SK-N-SH (cell line): ENCODE measurements at regions of chr2 and their contacts with region 1.

Region 1: GRCh38 chr2:85420536-85421259 is 2.2 kb downstream of the SH2D6 start:
- DNase-seq: peak; percentile 92
- H3K4me3 ChIP-seq: peak overlapping the region in 1 of 2 experiments; percentile 31; a peak in 1 of 4 replicates
- H3K27ac ChIP-seq: peak overlapping the region in 1 of 2 experiments; percentile 60; a peak in 2 of 4 replicates
- H3K4me1 ChIP-seq: peaks cover 9 to 23% of the 10 kb centered on the region in 2 experiments; a peak in 1 of 4 replicates
- H3K27me3 ChIP-seq: no peaks in the 10 kb centered on the region
- CTCF ChIP-seq: peak; percentile 99
- EP300 ChIP-seq: no peak
- RAD21 ChIP-seq: peak; percentile 99

Region 2: DNA sequence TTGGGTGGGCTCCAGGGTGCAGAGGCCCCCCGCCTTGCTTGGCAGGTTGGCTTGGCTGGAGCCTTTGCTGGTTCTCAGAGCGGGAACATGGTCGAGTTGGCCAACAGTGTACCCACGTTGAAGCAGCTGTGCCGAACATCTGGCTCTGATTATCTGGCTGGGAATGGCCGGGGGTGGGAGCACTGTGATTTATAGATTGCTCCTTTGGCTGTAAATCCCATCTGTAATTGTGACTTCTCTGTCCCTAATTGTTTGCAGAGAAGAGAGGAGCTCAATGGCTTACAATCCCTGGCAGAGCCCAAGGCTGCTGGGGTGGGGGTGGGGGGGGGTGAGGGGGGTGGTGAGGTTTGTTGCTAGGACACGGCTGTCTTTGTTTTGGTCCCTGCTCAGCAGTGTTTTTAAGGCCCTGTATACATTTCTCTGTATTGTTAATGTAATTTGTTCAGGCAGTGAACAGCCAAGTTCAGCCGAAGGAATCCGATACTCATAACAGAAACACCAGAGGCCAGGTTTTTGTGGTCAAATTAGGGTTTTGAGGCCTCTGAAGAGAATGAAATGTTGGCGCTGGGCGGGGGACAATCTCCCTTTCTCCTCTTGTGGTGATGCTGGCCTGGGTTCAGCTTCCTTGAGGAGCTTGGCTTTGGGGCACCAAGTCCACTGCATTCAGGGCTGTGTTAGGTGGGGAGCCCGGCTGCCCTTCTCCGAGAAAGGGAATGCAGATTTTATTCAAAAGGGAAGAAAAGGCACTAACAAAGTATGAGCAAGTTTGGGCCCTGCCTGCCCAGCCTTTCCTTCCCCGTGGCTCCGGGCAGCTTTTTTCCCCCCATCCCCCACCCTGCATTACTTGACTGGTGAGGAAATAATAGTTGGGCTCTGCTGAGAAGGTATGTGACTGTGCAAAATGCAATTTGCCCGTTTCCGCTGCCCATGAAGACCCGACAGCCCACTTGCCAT is 205.0 kb before region 1 on chr2:
- CTCF ChIA-PET with region 1: no interaction called
- POLR2A ChIA-PET with region 1: no interaction called
- DNase-seq: peak; percentile 87
- H3K4me3 ChIP-seq: peak overlapping the region in 1 of 2 experiments; percentile 7; a peak in 1 of 4 replicates
- H3K27ac ChIP-seq: peak overlapping the region; percentile 80 to 90
- H3K4me1 ChIP-seq: peaks cover 36 to 39% of the 10 kb centered on the region in 2 experiments
- H3K27me3 ChIP-seq: no peaks in the 10 kb centered on the region
- CTCF ChIP-seq: no peak
- EP300 ChIP-seq: peak in 1 of 2 experiments; percentile 92; a peak in 2 of 4 replicates
- RAD21 ChIP-seq: peak; percentile 3; the same call in 1 of the 2 replicates

Region 3: DNA sequence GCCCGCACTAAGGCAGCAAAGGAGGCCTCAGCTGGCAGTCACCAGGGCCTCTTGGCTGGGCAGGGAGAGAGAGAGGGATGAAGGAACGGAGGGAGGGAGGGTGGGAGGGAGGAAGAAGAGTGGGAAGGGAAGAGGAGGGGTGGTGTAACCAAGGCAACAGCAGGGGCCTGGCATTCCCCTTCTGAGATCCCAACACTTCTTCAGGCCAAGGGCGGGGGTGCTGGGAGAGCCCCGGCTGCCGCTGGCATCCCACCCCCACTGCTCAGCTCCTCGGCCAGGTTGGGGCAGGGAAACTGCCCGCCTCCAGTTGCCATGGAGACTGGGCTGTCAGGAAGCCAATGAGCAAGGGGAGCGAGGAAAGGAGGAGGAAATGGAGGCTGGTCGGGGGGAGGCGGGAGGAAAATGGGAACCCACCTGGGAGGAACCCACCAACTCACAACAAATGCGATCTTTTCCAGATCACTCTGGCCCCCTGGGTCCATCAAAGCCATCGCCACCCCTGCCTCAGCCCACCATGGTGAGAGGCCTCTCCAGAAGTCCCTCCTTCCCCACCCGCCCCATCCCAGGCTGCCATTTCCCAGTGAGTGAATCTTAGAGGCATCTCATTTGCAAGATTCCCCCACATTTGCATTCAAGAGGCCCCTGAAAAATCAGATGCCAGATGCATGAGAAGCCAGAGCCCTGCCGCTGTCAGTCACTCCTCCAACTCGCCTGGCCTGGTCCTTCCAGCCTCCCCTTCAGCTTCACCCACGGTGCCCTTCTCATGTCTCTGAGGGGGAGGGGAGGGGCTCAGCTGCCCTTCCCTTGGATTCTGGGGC is 10.3 kb after region 1 on chr2:
- CTCF ChIA-PET with region 1: interaction called, 28 read pairs
- POLR2A ChIA-PET with region 1: interaction called, 8 read pairs
- DNase-seq: peak; percentile 79
- H3K4me3 ChIP-seq: no peak overlapping the region
- H3K27ac ChIP-seq: no peak overlapping the region; a peak in 1 of 4 replicates
- H3K4me1 ChIP-seq: peaks cover 0 to 56% of the 10 kb centered on the region in 2 experiments; a peak in 2 of 4 replicates
- H3K27me3 ChIP-seq: no peaks in the 10 kb centered on the region
- CTCF ChIP-seq: no peak
- EP300 ChIP-seq: no peak
- RAD21 ChIP-seq: no peak

Region 4: DNA sequence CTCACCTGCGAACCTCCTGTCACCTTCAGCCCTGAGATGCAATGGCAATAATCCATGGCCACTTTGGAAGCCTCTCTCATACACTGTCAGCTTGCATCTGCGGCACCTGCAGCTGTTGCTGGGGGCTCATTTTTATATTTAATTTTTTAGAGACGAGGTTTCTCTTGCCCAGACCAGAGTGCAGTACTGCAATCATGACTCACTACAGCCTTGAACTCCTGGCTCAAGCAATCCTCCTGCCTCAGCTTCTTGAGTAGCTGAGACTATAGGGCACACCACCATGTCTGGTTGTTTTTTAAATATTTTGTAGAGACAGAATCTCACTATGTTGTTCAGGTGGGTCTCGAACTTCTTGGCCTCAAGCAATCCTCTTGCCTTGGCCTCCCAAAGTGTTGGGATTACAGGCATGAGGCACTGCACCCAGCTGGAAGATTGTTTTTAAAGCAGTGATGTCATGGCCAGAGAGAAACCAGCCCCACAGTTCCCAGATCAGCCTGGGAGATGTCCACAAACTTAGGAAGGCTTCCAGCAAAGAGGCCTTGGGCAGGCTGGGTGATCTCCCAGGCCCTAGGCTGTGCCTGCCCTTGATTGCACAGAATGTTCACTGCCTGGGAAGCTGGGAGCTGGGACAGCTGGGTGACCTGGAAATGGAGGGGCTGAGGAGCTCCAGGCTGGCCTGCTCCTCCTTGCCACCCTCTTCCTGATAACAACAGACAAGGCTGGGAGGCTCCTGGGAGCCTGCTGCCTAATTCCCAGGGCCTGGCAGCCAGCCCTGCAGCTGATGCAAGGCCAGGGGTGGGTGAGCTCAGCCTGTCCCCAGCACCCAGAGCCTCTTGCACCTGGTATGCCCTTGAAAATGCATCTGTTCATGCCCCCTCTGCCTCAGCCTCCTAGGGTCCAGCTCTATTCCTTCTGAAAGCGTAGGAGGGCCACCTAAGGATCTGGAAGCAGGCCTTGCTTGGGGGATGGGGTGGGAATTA is 24.9 kb after region 1 on chr2:
- CTCF ChIA-PET with region 1: interaction called, 10 read pairs
- POLR2A ChIA-PET with region 1: interaction called, 9 read pairs
- DNase-seq: peak; percentile 73
- H3K4me3 ChIP-seq: no peak overlapping the region
- H3K27ac ChIP-seq: peak overlapping the region; percentile 42 to 90; a peak in 3 of 4 replicates
- H3K4me1 ChIP-seq: peaks cover 18 to 33% of the 10 kb centered on the region in 2 experiments; a peak in 2 of 4 replicates
- H3K27me3 ChIP-seq: no peaks in the 10 kb centered on the region
- CTCF ChIP-seq: no peak
- EP300 ChIP-seq: peak in 1 of 2 experiments; percentile 43; a peak in 1 of 4 replicates
- RAD21 ChIP-seq: peak; percentile 23; the same call in 1 of the 2 replicates

Region 5: GRCh38 chr2:85538486-85539360 is 118.0 kb after region 1 on chr2 and contains the start of gene MAT2A:
- CTCF ChIA-PET with region 1: interaction called, 146 read pairs
- POLR2A ChIA-PET with region 1: interaction called, 106 read pairs
- DNase-seq: peak; percentile 97
- H3K4me3 ChIP-seq: peak within 1 kb of the TSS; percentile 94 to 99
- H3K27ac ChIP-seq: peak within 1 kb of the TSS; percentile 98 to 100
- H3K4me1 ChIP-seq: peaks cover 29 to 43% of the 10 kb centered on the region in 2 experiments; a peak in 3 of 4 replicates
- H3K27me3 ChIP-seq: no peaks in the 10 kb centered on the region
- CTCF ChIP-seq: peak; percentile 67
- EP300 ChIP-seq: peak in 1 of 2 experiments; percentile 10; a peak in 1 of 4 replicates
- RAD21 ChIP-seq: peak; percentile 60
- polyA plus RNA-seq, gene MAT2A: 187 and 326 TPM in 2 replicates

Region 6: GRCh38 chr2:85561317-85561979 is 140.8 kb after region 1 on chr2 and contains the start of gene GGCX:
- CTCF ChIA-PET with region 1: interaction called, 364 read pairs
- POLR2A ChIA-PET with region 1: interaction called, 19 read pairs
- DNase-seq: peak; percentile 91
- H3K4me3 ChIP-seq: peak within 1 kb of the TSS; percentile 65 to 97
- H3K27ac ChIP-seq: peak within 1 kb of the TSS; percentile 78 to 83
- H3K4me1 ChIP-seq: no peaks in the 10 kb centered on the region; a peak in 2 of 4 replicates
- H3K27me3 ChIP-seq: no peaks in the 10 kb centered on the region
- CTCF ChIP-seq: no peak
- EP300 ChIP-seq: 0 out of 4 replicates have a peak, but pooled peaks of 1 of the 2 experiments have one; percentile 14
- RAD21 ChIP-seq: no peak
- polyA plus RNA-seq, gene GGCX: 26.5 and 34.5 TPM in 2 replicates